A673 (cell line): ENCODE measurements at regions of chr6 and their contacts with region 1.

Region 1: DNA sequence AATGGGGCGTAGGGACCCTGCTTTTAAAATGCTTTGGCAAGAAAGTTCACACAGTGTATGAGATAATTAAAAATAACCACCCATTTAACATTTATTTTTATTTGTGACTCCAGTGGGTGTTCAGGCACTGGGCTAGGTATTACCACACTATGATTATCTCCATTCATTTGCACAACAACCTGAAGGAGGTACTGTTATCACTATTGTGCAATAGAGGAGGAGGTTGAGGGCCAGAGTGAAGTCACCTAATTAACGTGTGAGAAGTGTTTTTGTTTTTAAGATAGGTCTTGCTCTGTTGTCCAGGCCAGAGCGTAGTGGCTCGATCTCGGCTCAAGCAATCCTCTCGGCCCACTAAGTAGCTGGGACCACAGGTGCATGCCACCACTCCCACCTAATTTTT is 29.2 kb downstream of the MAK start:
- DNase-seq: no peak
- H3K4me3 ChIP-seq: no peak overlapping the region
- H3K27ac ChIP-seq: no peak overlapping the region
- H3K4me1 ChIP-seq: no peaks in the 10 kb centered on the region
- H3K27me3 ChIP-seq: no peaks in the 10 kb centered on the region
- CTCF ChIP-seq: no peak

Region 2: GRCh38 chr6:10495029-10495428 is 314.1 kb before region 1 on chr6:
- CTCF ChIA-PET with region 1: interaction called, 11 read pairs
- POLR2A ChIA-PET with region 1: no interaction called
- intact Hi-C with region 1: no loop called
- DNase-seq: no peak
- H3K4me3 ChIP-seq: no peak overlapping the region
- H3K27ac ChIP-seq: no peak overlapping the region
- H3K4me1 ChIP-seq: no peaks in the 10 kb centered on the region
- H3K27me3 ChIP-seq: no peaks in the 10 kb centered on the region
- CTCF ChIP-seq: no peak

Region 3: GRCh38 chr6:10582774-10583508 is 226.2 kb before region 1 on chr6:
- CTCF ChIA-PET with region 1: no interaction called
- POLR2A ChIA-PET with region 1: no interaction called
- intact Hi-C with region 1: no loop called
- DNase-seq: no peak
- H3K4me3 ChIP-seq: no peak overlapping the region
- H3K27ac ChIP-seq: no peak overlapping the region
- H3K4me1 ChIP-seq: peaks cover 6% of the 10 kb centered on the region
- H3K27me3 ChIP-seq: no peaks in the 10 kb centered on the region
- CTCF ChIP-seq: no peak

Region 4: GRCh38 chr6:10759312-10759839 is 49.7 kb before region 1 on chr6:
- CTCF ChIA-PET with region 1: no interaction called
- POLR2A ChIA-PET with region 1: no interaction called
- intact Hi-C with region 1: no loop called
- DNase-seq: peak; percentile 83
- H3K4me3 ChIP-seq: no peak overlapping the region
- H3K27ac ChIP-seq: no peak overlapping the region
- H3K4me1 ChIP-seq: no peaks in the 10 kb centered on the region
- H3K27me3 ChIP-seq: no peaks in the 10 kb centered on the region
- CTCF ChIP-seq: peak; percentile 65